GM12878 (cell line): ENCODE measurements at regions of chr11 and their contacts with region 1.

Region 1: GRCh38 chr11:110000031-110000502 is 93.1 kb upstream of the ZC3H12C start:
- DNase-seq: peak; percentile 92
- ATAC-seq: peak; percentile 96
- H3K4me3 ChIP-seq: no peak overlapping the region
- H3K27ac ChIP-seq: peak overlapping the region; percentile 62; the same call in 1 of the 2 replicates
- H3K4me1 ChIP-seq: peaks cover 19% of the 10 kb centered on the region
- H3K27me3 ChIP-seq: no peaks in the 10 kb centered on the region
- CTCF ChIP-seq: no peak
- EP300 ChIP-seq: peak; percentile 100
- POLR2A ChIP-seq: no peak
- RAD21 ChIP-seq: peak; percentile 43; the same call in 1 of the 2 replicates

Region 2: GRCh38 chr11:109984634-109985289 is 15.3 kb before region 1 on chr11:
- CTCF ChIA-PET with region 1: interaction called, 8 read pairs
- POLR2A ChIA-PET with region 1: interaction called, 34 read pairs
- RAD21 ChIA-PET with region 1: interaction called, 23 read pairs
- SMC1A ChIA-PET with region 1: interaction called, 28 read pairs
- in situ Hi-C with region 1: no loop called
- intact Hi-C with region 1: no loop called
- DNase-seq: peak; percentile 67
- ATAC-seq: peak; percentile 94
- H3K4me3 ChIP-seq: peak overlapping the region; percentile 30
- H3K27ac ChIP-seq: peak overlapping the region; percentile 89
- H3K4me1 ChIP-seq: peaks cover 19% of the 10 kb centered on the region
- H3K27me3 ChIP-seq: no peaks in the 10 kb centered on the region; a peak in 1 of 4 replicates
- CTCF ChIP-seq: no peak
- EP300 ChIP-seq: peak; percentile 94 to 95
- POLR2A ChIP-seq: no peak
- RAD21 ChIP-seq: no peak

Region 3: GRCh38 chr11:110015695-110016094 is 15.6 kb after region 1 on chr11:
- CTCF ChIA-PET with region 1: no interaction called
- POLR2A ChIA-PET with region 1: interaction called, 3 read pairs
- RAD21 ChIA-PET with region 1: no interaction called
- SMC1A ChIA-PET with region 1: interaction called, 118 read pairs
- in situ Hi-C with region 1: no loop called
- intact Hi-C with region 1: no loop called
- DNase-seq: no peak
- ATAC-seq: no peak
- H3K4me3 ChIP-seq: no peak overlapping the region
- H3K27ac ChIP-seq: no peak overlapping the region
- H3K4me1 ChIP-seq: no peaks in the 10 kb centered on the region
- H3K27me3 ChIP-seq: no peaks in the 10 kb centered on the region
- CTCF ChIP-seq: no peak
- EP300 ChIP-seq: no peak
- POLR2A ChIP-seq: no peak
- RAD21 ChIP-seq: no peak

Region 4: GRCh38 chr11:110086892-110087309 is 86.8 kb after region 1 on chr11:
- CTCF ChIA-PET with region 1: interaction called, 3 read pairs
- POLR2A ChIA-PET with region 1: interaction called, 3 read pairs
- RAD21 ChIA-PET with region 1: interaction called, 3 read pairs
- SMC1A ChIA-PET with region 1: interaction called, 18 read pairs
- in situ Hi-C with region 1: no loop called
- intact Hi-C with region 1: no loop called
- DNase-seq: no peak
- ATAC-seq: 0 out of 3 replicates have a peak, but pooled peaks have one; percentile 3
- H3K4me3 ChIP-seq: no peak overlapping the region
- H3K27ac ChIP-seq: no peak overlapping the region
- H3K4me1 ChIP-seq: peaks cover 10% of the 10 kb centered on the region
- H3K27me3 ChIP-seq: no peaks in the 10 kb centered on the region
- CTCF ChIP-seq: no peak
- EP300 ChIP-seq: no peak
- POLR2A ChIP-seq: no peak
- RAD21 ChIP-seq: no peak

Region 5: GRCh38 chr11:110098645-110099044 is 98.6 kb after region 1 on chr11:
- CTCF ChIA-PET with region 1: interaction called, 5 read pairs
- POLR2A ChIA-PET with region 1: interaction called, 3 read pairs
- RAD21 ChIA-PET with region 1: interaction called, 9 read pairs
- SMC1A ChIA-PET with region 1: interaction called, 14 read pairs
- in situ Hi-C with region 1: no loop called
- intact Hi-C with region 1: no loop called
- DNase-seq: no peak
- ATAC-seq: peak; percentile 78
- H3K4me3 ChIP-seq: no peak overlapping the region
- H3K27ac ChIP-seq: no peak overlapping the region
- H3K4me1 ChIP-seq: peaks cover 11% of the 10 kb centered on the region; the same call in 1 of the 2 replicates
- H3K27me3 ChIP-seq: no peaks in the 10 kb centered on the region
- CTCF ChIP-seq: peak; percentile 23 to 41 (median 25); a peak in 3 of 6 replicates
- EP300 ChIP-seq: peak in 1 of 2 experiments; percentile 30; a peak in 1 of 4 replicates
- POLR2A ChIP-seq: no peak
- RAD21 ChIP-seq: peak; percentile 57